Activated CD4-positive, alpha-beta memory T cell treated with anti-CD3 and anti-CD28 coated beads for 36 hours (primary cell): ENCODE measurements at regions of chr6 and their contacts with region 1.

Region 1: DNA sequence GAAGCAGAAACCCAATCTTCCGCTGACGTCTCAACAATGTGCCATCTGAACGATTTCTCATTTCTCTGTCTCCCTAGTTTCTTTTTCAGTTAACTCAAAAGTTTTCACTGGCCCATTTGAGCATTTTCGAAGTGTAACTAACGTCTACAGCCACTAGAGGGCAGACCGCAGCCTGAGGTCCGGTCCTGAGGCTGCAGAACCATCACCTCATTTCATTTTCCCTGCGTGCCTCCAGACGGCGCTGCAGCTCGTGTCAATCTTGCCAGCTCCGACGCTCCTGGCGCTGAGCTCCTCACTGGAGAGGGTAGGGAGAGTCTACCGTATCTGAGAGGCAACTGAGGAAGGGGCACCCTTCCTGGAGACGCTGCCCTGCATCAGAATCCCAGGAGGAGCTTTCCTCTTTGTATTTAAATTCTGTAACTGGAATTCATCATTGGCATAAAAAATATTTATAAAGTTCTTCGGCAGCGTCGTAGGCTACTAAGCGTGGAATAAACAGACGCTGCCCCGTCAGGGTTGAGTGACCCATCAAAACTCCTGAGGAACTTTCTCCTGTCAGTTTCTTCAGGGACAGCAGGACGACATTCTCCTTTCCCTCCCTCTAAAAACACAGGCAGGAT is 28.5 kb upstream of the DTNBP1 start:
- DNase-seq: peak; percentile 87
- H3K4me3 Mint-ChIP-seq: peak overlapping the region; percentile 43
- H3K27ac Mint-ChIP-seq: peak overlapping the region; percentile 43
- H3K4me1 Mint-ChIP-seq: peaks cover 8% of the 10 kb centered on the region
- H3K27me3 Mint-ChIP-seq: peaks cover 7% of the 10 kb centered on the region

Region 2: DNA sequence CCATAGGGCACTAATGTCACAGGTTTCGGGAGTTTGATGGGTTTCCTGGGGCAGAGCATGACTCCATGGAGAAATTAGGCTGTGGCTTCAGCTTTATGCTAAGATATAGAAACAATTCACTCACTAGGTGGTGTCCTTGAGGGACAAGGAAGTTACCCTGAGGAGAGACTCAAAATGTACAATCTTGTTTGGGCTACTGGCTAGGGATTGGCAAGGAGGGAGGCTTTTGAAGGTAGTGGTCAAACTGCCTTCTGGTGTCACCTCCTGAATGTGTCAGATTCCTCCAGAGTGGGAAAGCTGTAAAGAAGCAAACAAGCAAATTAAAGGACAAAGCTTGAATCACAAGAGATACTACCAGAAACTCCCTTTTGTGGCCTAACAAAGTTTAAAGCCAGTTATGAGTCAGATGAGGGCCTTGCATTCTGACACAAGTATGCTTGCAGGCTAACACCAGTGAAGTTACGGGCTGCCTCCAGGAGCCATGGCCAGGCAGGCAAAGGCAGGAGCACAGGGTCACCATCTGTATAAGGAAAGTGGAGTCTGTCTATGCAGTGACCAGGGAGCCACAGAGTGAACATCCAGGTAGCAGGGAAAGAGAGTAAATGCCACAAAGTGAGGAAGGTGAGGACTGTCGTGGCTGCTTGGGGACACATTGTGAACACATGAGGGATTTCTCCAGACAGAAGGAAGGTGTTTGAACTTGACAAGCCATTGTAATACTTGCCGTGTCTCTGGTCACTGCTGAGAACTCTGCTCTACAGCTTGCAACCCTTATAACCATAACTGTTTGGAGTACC is 79.2 kb after region 1 on chr6:
- CTCF ChIA-PET with region 1: interaction called, 14 read pairs
- POLR2A ChIA-PET with region 1: no interaction called
- intact Hi-C with region 1: loop called (anchors 2 kb)
- DNase-seq: peak; percentile 55
- H3K4me3 Mint-ChIP-seq: no peak overlapping the region
- H3K27ac Mint-ChIP-seq: peak overlapping the region; percentile 71
- H3K4me1 Mint-ChIP-seq: peaks cover 42% of the 10 kb centered on the region
- H3K27me3 Mint-ChIP-seq: peaks cover 6% of the 10 kb centered on the region

Region 3: GRCh38 chr6:15911753-15912504 is 220.6 kb after region 1 on chr6:
- CTCF ChIA-PET with region 1: interaction called, 3 read pairs
- POLR2A ChIA-PET with region 1: no interaction called
- intact Hi-C with region 1: loop called (anchors 10 kb)
- DNase-seq: peak; percentile 67
- H3K4me3 Mint-ChIP-seq: no peak overlapping the region
- H3K27ac Mint-ChIP-seq: no peak overlapping the region
- H3K4me1 Mint-ChIP-seq: peaks cover 32% of the 10 kb centered on the region
- H3K27me3 Mint-ChIP-seq: no peaks in the 10 kb centered on the region

Region 4: DNA sequence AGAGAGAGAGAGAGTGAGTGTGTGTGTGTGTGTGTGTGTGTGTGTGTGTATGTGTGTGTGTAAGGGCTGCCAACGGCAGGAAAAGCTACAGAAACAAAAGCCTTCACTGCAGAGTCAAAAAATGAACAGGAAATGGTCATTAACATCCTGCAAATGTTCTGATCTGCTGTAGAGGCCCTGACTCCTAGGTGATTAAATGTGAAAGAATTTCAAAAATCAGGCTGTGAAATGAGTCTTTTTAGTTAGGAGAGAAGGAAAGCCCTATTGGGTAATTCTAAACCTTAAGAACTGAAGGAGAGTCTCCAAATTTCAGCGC is 271.0 kb after region 1 on chr6:
- CTCF ChIA-PET with region 1: no interaction called
- POLR2A ChIA-PET with region 1: no interaction called
- intact Hi-C with region 1: loop called (anchors 5 kb)
- DNase-seq: peak; percentile 34
- H3K4me3 Mint-ChIP-seq: no peak overlapping the region
- H3K27ac Mint-ChIP-seq: peak overlapping the region; percentile 7
- H3K4me1 Mint-ChIP-seq: peaks cover 14% of the 10 kb centered on the region
- H3K27me3 Mint-ChIP-seq: no peaks in the 10 kb centered on the region

Region 5: DNA sequence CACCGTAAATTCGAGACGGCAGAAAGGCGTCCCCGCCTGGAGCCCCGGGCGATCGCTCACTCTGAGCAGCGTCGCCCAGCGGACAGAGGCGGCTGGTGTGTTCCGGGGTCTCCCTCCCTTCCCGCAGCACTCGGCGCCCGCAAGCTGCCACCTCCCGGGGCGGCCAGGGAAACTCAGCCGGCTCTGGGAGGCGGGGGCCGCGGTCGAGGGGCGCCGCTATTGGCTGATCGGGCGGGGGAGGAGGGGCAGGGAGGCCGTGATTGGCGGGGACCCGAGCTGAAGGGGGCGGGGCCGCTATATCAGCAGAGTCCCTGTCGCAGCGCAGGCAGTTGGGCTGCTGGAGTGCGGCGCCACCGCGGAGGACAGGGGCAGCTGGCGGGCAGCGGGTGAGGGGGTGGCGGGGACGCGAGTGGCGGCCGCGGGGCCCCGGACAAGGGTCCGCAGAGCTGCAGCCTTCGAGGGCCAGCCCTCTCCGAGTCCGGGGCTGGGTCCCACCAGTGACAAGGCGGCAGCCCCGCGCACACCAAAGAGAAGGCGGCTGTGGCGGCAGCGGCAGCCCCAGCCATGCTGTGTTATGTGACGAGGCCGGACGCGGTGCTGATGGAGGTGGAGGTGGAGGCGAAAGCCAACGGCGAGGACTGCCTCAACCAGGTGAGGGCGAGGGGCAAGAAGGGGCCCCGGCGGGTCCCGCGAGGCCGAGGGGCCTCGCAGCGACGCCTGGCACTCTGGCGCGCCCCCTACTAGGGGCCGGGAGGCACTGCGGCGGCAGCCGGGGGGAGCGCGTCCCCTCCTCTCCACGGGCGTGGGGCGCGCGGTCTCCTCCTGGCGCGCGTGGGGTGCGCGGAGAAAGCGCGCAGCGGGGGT is 437.6 kb after region 1 on chr6 and contains the start of gene MYLIP:
- CTCF ChIA-PET with region 1: interaction called, 23 read pairs
- POLR2A ChIA-PET with region 1: interaction called, 4 read pairs
- intact Hi-C with region 1: loop called (anchors 1 kb)
- DNase-seq: peak; percentile 98
- H3K4me3 Mint-ChIP-seq: peak within 1 kb of the TSS; percentile 93
- H3K27ac Mint-ChIP-seq: peak within 1 kb of the TSS; percentile 94
- H3K4me1 Mint-ChIP-seq: peaks cover 28% of the 10 kb centered on the region
- H3K27me3 Mint-ChIP-seq: no peaks in the 10 kb centered on the region
- total RNA-seq, gene MYLIP: 11.4 TPM

Region 6: GRCh38 chr6:16136621-16137450 is 445.5 kb after region 1 on chr6:
- CTCF ChIA-PET with region 1: interaction called, 12 read pairs
- POLR2A ChIA-PET with region 1: no interaction called
- intact Hi-C with region 1: no loop called
- DNase-seq: peak; percentile 75
- H3K4me3 Mint-ChIP-seq: peak overlapping the region; percentile 46
- H3K27ac Mint-ChIP-seq: peak overlapping the region; percentile 86
- H3K4me1 Mint-ChIP-seq: peaks cover 76% of the 10 kb centered on the region
- H3K27me3 Mint-ChIP-seq: no peaks in the 10 kb centered on the region

Region 7: GRCh38 chr6:16206595-16207037 is 515.3 kb after region 1 on chr6:
- CTCF ChIA-PET with region 1: interaction called, 63 read pairs
- POLR2A ChIA-PET with region 1: no interaction called
- intact Hi-C with region 1: loop called (anchors 1 kb)
- DNase-seq: peak; percentile 44
- H3K4me3 Mint-ChIP-seq: no peak overlapping the region
- H3K27ac Mint-ChIP-seq: no peak overlapping the region
- H3K4me1 Mint-ChIP-seq: peaks cover 2% of the 10 kb centered on the region
- H3K27me3 Mint-ChIP-seq: peaks cover 16% of the 10 kb centered on the region